Head of caudate nucleus (tissue), 42 donors: ENCODE measurements at regions of chr1 and their contacts with region 1.

Region 1: GRCh38 chr1:160997323-160998038 is 23.5 kb downstream of the F11R start:
- DNase-seq: peak; percentile 15 to 82 (median 58)

Region 2: DNA sequence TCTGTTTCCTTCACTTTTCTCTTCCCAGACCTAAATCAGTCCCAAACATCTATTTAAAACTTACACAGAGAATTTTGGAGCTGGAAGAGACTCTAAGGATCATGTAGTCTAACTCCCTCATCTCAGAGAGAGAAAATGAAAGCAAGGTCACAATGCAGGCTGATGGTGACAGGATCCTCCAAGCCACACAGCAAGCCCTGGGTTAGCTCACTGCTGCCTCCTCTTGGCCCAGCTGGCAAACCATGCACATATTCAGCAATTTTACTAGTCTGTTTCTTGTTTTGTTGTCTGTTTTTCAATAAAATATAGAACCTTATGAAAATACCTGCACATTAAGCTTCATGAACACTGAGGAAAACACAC is 229.2 kb before region 1 on chr1:
- intact Hi-C with region 1: no loop called
- DNase-seq: peak in 4 of 42 donors; percentile 17 to 31 (median 22)

Region 3: DNA sequence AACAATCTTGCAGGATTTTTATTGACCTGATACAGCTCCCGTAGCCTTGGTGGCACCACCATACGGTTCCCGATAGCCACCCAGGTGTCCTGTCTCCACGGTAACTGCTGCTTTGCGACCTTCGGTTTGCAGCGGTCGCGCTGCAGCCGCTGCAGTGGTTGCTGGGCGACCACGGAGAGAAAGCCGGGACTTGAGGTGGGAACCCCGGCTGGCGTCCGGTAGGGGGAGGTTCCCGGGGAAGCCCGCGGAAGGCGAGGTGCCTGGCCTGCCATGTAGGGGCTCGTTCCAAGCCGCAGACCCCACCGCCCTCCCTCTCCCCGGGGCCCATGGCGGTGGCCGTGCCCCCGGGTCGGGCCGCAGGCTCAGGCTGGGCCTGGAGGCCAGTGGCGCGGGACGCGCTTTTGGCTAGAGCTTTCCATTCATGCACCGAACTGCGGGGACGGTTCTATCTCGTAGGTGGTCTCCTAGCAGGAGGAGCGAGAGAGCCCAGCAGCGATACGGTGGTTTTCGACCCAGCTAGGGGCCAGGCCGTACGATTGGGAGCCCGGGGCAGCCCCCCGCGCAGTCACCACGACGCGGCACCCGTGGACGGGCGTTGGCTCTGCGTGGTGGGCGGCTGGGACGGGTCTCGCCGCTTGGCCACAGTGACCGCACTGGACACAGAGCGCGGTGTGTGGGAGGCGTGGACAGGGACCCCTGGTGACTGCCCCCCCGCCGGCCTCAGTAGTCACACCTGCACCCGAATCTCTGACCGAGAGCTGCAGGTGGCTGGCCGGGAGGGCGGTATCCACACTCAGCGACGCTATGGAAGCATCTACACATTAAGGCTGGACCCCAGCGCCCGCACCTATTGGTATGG is 101.0 kb after region 1 on chr1 and contains the start of gene KLHDC9:
- intact Hi-C with region 1: loop called (anchors 5 kb)
- DNase-seq: peak; percentile 60 to 94 (median 82)